HepG2 (cell line): ENCODE measurements at regions of chr6 and their contacts with region 1.

Region 1: DNA sequence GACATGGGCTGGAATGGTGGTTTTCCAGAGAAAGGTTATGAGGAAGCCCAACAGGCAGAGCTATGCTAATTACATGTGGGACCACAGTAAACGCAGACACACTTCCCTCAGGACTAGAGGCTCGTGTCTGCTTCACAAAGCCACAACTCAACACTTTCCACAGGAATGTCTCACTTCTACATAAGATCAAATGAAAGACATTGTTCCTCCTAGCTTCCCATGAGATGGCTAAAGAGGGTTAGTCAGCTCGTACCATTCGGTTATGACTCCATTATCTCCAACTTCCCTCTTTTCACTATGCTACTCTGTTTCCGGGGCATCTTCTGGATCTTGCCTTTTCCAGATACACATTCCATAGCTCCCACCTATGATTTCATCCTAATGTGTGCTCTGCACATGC is 29.1 kb upstream of the ZC3H12D start:
- DNase-seq: no peak
- ATAC-seq: no peak
- H3K4me3 ChIP-seq: no peak overlapping the region
- H3K27ac ChIP-seq: no peak overlapping the region
- H3K4me1 ChIP-seq: peaks cover 18% of the 10 kb centered on the region
- H3K27me3 ChIP-seq: no peaks in the 10 kb centered on the region
- CTCF ChIP-seq: no peak
- EP300 ChIP-seq: no peak
- POLR2A ChIP-seq: no peak
- RAD21 ChIP-seq: no peak

Region 2: DNA sequence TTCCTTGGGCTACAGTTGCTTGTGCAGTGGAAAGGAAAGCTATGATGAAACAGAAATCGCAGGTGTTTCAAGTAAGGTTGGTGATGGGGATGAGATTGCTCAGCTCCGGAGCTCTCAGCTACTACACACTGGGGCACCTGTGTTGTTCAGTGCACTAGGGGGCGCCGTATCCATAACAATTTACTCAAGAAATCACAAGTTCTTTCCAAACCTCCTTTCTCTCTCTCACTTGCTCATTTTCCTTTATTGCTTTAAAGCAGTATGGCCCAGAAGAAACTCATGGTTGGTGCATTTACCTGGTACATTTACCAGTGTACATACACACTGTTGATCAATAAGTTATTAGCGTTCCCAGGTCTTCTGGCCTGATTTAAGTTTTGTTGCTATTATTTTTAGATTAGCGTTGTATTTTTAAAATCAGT is 431.6 kb before region 1 on chr6:
- CTCF ChIA-PET with region 1: interaction called, 12 read pairs
- POLR2A ChIA-PET with region 1: no interaction called
- in situ Hi-C with region 1: no loop called
- intact Hi-C with region 1: loop called (anchors 1 kb)
- DNase-seq: peak; percentile 62
- ATAC-seq: peak; percentile 97
- H3K4me3 ChIP-seq: no peak overlapping the region
- H3K27ac ChIP-seq: no peak overlapping the region
- H3K4me1 ChIP-seq: peaks cover 23% of the 10 kb centered on the region
- H3K27me3 ChIP-seq: peaks cover 0 to 4% of the 10 kb centered on the region in 2 experiments; a peak in 1 of 5 replicates
- CTCF ChIP-seq: peak; percentile 90
- EP300 ChIP-seq: no peak
- POLR2A ChIP-seq: no peak
- RAD21 ChIP-seq: peak; percentile 91

Region 3: DNA sequence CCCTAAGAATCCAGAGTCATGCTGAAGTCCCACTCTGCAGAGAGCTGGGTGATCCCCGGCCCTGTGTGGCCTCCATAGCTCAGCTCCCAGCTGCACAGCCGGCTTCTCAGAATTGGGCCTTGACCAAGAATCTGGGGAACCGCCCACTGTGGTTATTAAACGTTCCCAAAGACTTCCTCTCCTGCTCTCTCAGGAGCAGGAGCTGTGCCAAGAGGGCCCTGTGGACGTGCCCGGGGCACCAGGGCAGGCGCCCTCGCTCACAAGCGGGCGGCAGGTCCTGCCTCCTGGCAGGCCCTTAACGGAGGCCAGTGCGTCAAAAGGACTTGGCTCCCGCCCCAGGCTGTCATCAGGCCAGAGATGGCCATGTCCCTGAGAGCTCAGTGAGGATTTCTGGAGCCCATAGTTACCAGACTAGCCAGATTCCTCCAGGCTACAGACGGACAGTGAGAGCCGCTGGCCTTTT is 59.5 kb before region 1 on chr6:
- CTCF ChIA-PET with region 1: no interaction called
- POLR2A ChIA-PET with region 1: no interaction called
- in situ Hi-C with region 1: no loop called
- intact Hi-C with region 1: loop called (anchors 5 kb)
- DNase-seq: no peak
- ATAC-seq: peak; percentile 64
- H3K4me3 ChIP-seq: peak overlapping the region in 1 of 3 experiments; percentile 19; a peak in 2 of 6 replicates
- H3K27ac ChIP-seq: no peak overlapping the region
- H3K4me1 ChIP-seq: peaks cover 32% of the 10 kb centered on the region
- H3K27me3 ChIP-seq: no peaks in the 10 kb centered on the region
- CTCF ChIP-seq: no peak
- EP300 ChIP-seq: no peak
- POLR2A ChIP-seq: no peak
- RAD21 ChIP-seq: no peak

Region 4: GRCh38 chr6:149484733-149485700 is 28.9 kb before region 1 on chr6 and contains the start of gene ZC3H12D:
- CTCF ChIA-PET with region 1: interaction called, 8 read pairs
- POLR2A ChIA-PET with region 1: interaction called, 4 read pairs
- in situ Hi-C with region 1: no loop called
- intact Hi-C with region 1: loop called (anchors 1 kb)
- DNase-seq: peak; percentile 91
- ATAC-seq: peak; percentile 97
- H3K4me3 ChIP-seq: peak within 1 kb of the TSS; percentile 46 to 72 (median 48)
- H3K27ac ChIP-seq: peak within 1 kb of the TSS; percentile 82
- H3K4me1 ChIP-seq: peaks cover 46% of the 10 kb centered on the region
- H3K27me3 ChIP-seq: no peaks in the 10 kb centered on the region
- CTCF ChIP-seq: peak; percentile 77
- EP300 ChIP-seq: peak in 1 of 2 experiments; percentile 79; a peak in 2 of 4 replicates
- POLR2A ChIP-seq: peak; percentile 74 to 80
- RAD21 ChIP-seq: peak; percentile 63
- total RNA-seq, gene ZC3H12D: 2.1 and 2.7 TPM in 2 replicates